Caki2 (cell line): ENCODE measurements at regions of chr17 and their contacts with region 1.

Region 1: GRCh38 chr17:17467720-17468119 is 9.1 kb upstream of the MED9 start:
- DNase-seq: no peak

Region 2: GRCh38 chr17:17376362-17376761 is 91.4 kb before region 1 on chr17:
- in situ Hi-C with region 1: loop called (anchors 10 kb)
- DNase-seq: no peak

Region 3: DNA sequence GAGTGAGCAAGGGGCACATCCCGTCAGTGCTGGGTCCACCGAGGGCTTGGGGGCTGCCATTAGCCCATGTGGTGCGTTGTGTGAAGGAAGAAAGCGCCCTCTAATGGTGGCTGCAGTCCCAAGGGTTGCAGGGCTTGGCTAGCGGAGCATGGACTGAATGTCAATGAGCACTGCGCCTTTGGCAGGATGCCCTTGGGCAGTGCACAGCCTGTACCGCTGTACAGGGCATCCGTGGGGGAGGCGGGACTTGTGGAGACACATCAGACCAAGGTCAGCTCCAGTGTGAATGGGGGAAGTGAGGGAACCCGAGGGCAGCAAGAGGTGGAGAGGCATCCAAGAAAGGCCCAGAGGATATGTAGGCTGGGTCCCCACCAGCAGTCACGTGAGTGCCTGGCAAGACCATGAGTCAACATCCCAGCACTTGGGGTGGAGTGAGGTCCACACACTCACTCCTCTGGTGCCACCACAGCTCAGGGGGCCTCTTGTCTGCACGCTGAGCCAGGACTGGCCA is 66.4 kb before region 1 on chr17:
- in situ Hi-C with region 1: no loop called
- DNase-seq: peak; percentile 13

Region 4: DNA sequence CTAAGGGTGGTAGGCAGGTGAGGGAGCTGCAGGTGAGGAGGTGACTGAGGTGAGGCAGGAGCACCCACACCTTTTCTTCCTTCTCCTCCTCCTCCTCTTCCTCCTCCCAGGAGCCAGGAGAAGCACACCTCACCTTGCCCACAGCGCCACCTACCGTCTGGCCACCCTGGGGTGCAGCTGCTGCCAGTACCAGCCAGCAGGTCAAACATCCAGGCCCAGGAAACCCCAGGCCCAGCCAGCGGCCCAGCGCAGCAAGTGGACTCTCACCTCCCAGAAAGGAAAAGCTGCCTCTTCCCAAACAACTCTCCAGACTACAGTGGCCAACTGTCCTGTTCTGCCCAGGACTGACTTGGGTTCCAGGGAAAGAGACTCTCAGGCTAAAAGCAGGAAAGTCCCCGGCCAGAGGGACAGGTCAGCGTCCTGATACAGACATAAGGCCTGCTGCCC is 101.1 kb after region 1 on chr17:
- in situ Hi-C with region 1: no loop called
- DNase-seq: no peak